Panc1 (cell line): ENCODE measurements at regions of chr2 and their contacts with region 1.

Region 1: GRCh38 chr2:66596256-66596655 is 161.3 kb downstream of the MEIS1 start:
- DNase-seq: no peak
- ATAC-seq: no peak
- H3K4me3 ChIP-seq: no peak overlapping the region
- H3K27ac ChIP-seq: no peak overlapping the region
- H3K4me1 ChIP-seq: no peaks in the 10 kb centered on the region
- H3K27me3 ChIP-seq: no peaks in the 10 kb centered on the region; the same call in 1 of the 2 replicates
- CTCF ChIP-seq: no peak

Region 2: GRCh38 chr2:66481100-66481549 is 115.1 kb before region 1 on chr2:
- CTCF ChIA-PET with region 1: no interaction called
- POLR2A ChIA-PET with region 1: no interaction called
- in situ Hi-C with region 1: no loop called
- intact Hi-C with region 1: no loop called
- DNase-seq: no peak
- ATAC-seq: no peak
- H3K4me3 ChIP-seq: no peak overlapping the region
- H3K27ac ChIP-seq: no peak overlapping the region
- H3K4me1 ChIP-seq: no peaks in the 10 kb centered on the region
- H3K27me3 ChIP-seq: no peaks in the 10 kb centered on the region; the same call in 1 of the 2 replicates
- CTCF ChIP-seq: no peak

Region 3: GRCh38 chr2:67322353-67323001 is 726.2 kb after region 1 on chr2:
- CTCF ChIA-PET with region 1: no interaction called
- POLR2A ChIA-PET with region 1: no interaction called
- in situ Hi-C with region 1: no loop called
- intact Hi-C with region 1: loop called (anchors 10 kb)
- DNase-seq: peak; percentile 55
- ATAC-seq: peak; percentile 88
- H3K4me3 ChIP-seq: no peak overlapping the region
- H3K27ac ChIP-seq: no peak overlapping the region
- H3K4me1 ChIP-seq: no peaks in the 10 kb centered on the region
- H3K27me3 ChIP-seq: peaks cover 2% of the 10 kb centered on the region; the same call in 1 of the 2 replicates
- CTCF ChIP-seq: peak; percentile 67